ENCODE measurements at regions of chr13 and their contacts with region 1.

Region 1: GRCh38 chr13:52850396-52851136 is 2.1 kb upstream of the PCDH8 start:
- DNase-seq: peak; percentile 42
- H3K4me3 ChIP-seq: peak overlapping the region; percentile 46 to 53 (median 51)
- H3K27ac ChIP-seq: no peak overlapping the region
- H3K4me1 ChIP-seq: peaks cover 4% of the 10 kb centered on the region
- H3K27me3 ChIP-seq: peaks cover 55% of the 10 kb centered on the region
- CTCF ChIP-seq: no peak

Region 2: DNA sequence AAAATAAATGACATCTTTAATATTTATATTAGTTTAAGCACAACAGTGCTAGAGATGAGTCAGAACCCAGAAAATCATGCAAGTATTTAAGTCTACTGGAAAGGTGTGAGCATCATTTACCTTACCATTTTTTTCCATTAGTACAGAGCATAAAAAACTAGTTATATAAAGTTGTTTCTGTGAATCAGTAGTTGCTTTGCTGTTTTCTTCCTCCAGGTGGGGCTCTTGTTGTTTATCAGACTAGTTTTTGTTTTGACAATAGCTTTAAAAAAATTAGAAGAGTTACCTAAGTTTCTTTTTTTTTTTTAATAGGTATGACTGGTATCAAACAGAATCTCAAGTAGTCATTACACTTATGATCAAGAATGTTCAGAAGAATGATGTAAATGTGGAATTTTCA is 185.2 kb before region 1 on chr13:
- CTCF ChIA-PET with region 1: no interaction called
- dilution Hi-C with region 1: no loop called
- in situ Hi-C with region 1: no loop called
- intact Hi-C with region 1: loop called (anchors 5 kb)
- DNase-seq: peak; percentile 37
- H3K4me3 ChIP-seq: no peak overlapping the region
- H3K27ac ChIP-seq: no peak overlapping the region
- H3K4me1 ChIP-seq: no peaks in the 10 kb centered on the region
- H3K27me3 ChIP-seq: no peaks in the 10 kb centered on the region
- CTCF ChIP-seq: peak; percentile 38 to 53

Region 3: DNA sequence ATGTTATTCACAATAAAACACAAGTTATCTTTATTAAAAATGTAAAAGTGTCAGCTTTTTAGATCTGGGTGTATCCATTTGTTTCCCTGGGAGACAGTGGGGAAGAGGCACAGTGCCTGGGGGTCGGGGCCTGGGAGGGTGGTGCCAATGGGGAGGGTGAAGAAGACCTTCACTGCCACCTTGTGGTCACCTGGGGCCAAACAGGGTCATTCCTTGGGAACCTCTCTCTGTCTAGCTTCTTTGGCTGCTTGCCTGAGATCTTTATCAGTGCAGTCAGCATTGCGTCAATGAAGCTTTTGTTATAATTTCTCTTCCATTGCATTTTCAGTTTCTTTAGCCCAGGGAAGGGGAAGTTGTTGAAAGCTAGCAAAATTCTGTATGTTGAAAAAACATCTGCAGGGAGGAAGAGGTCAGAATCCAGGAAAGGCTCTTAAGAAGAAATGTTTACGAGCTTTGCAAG is 41.2 kb before region 1 on chr13:
- CTCF ChIA-PET with region 1: no interaction called
- dilution Hi-C with region 1: no loop called
- in situ Hi-C with region 1: no loop called
- intact Hi-C with region 1: no loop called
- DNase-seq: peak; percentile 84
- H3K4me3 ChIP-seq: no peak overlapping the region
- H3K27ac ChIP-seq: no peak overlapping the region
- H3K4me1 ChIP-seq: no peaks in the 10 kb centered on the region
- H3K27me3 ChIP-seq: no peaks in the 10 kb centered on the region
- CTCF ChIP-seq: peak; percentile 69 to 86

Measured in mammary epithelial cell (primary cell).